ENCODE measurements at regions of chr1 and their contacts with region 1.

Region 1: DNA sequence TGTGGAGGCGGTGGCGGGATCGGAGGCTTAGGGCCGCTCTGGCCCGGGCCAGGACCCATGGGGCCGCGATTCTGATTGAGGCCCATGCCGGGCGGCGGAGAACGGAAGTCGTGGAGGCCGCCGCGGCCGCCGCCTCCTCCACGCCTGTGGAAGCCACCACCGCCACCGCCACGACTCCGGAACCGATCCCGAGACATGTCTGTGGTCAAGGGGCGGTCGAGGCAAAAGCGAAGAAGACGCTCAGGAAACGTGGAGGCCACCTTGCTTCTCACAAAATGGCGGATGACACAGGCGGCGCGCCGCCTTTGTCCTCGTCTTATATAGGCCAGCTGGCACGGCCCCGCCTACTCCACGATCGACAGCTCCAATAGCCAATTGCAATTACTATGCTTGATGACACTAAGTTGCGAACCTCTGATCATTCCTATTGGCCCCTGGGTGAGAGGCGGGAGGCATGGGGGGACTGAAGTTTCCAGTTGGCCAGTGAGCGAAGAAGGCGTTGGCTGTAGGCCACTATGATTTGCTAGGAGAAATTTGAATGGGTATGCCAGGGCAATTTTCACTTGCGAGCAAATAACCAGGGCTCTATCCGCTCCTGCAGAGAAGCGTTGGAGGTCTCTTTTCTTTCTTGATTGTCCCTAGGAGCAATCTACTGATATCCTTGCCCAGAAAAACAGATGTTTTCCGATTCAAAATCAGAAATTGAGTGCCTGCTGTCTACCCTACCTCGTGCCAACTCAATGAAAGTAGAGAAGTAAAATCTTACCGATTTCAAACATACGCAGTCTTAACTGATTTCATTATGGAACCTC is at the start of gene SFPQ:
- DNase-seq: peak; percentile 95 to 99 (median 96)

Region 2: DNA sequence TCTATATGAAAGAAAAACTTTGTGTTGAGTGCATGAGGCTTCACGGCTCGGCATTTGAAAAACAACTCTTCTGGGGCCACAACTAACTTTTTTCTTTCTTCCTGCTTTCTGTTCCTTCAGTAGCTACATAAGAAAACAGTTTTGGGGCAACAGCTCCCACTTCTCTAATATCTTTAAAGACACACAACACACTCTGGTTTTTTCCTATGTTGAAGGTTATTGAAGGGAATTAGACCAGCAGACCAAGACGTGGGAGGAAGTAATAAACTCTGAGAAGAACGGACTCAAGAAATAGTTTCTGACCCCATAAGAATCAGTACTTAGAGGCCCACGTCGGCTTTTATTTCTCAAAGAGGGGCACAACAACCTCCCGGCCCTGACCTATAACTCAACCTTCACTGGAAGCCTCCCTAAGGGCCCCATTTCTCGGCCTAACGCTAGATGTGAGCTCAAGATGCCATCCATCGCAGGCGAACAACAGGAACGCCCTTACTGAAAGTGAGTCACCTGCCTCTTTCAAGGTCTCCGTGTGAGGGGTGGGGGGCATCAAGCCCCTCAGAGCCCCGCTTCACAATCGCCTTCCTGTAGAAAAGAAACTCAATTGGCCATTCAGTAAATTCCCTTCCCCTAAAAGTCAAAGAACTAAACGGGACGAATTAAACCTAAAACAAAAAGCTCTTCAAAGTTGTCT is 162.2 kb before region 1 on chr1:
- intact Hi-C with region 1: loop called (anchors 5 kb)
- DNase-seq: peak in 2 of 10 donors; percentile 2 to 9

Region 3: DNA sequence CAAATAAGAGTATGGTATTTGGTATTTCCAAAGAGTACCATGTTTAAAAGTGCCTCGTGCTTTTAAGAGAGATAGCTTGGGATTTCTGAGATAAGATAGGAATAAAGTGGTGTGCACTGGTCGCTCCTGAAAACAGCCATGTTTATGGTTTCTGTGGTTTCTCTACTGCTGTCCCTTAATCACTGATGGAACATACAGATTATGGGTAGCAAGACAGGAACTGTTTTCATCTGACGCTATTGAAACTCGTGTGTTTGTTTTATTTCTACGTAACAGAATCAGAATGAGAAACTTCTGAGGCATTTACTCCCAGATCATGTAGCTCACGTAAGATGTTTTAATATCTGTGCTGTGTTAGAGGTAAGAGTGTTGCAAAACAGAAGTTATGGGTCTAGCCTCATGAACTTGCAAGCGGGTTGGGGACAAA is 238.1 kb after region 1 on chr1:
- intact Hi-C with region 1: no loop called
- DNase-seq: no peak

Region 4: DNA sequence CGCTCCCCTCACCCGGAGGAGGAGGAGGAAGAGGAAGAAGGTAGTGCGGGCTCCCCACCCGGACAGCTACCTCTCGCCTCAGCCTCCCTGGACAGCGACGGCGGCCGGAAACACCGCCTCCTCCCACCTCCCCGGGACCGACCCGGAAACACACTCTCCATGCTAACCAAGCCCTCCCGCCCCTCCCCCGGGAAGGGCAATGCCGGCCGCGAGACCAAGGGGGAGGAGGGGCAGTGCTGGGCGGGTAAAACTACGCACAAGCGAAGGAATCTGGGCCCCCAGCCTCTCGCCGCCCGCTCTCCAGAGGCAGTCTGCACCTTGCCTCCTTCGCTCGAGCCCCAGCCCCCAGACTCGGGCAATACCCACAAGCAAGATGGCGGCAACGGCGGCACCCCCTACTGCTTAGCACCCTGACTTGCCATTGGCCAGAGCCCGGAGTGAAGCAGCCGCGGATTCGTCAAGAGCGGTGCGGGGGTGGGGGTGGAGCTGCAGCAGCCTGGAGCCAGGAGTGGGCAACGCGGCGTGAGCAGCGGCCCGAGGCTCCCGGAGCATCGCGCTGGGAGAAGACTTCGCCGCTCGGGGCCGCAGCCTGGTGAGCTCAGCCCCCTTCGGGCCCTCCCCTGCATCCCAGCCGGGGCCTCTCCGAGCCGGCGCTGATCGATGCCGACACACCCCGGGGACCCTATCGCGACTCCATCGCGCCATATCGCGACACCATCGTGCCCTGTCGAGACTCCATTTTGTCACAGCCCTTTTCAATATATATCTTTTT is 364.4 kb after region 1 on chr1 and contains the starts of genes KIAA0319L and NCDN:
- intact Hi-C with region 1: loop called (anchors 2 kb)
- DNase-seq: peak; percentile 94 to 99 (median 96)

Region 5: GRCh38 chr1:35715568-35716002 is 522.5 kb after region 1 on chr1:
- intact Hi-C with region 1: loop called (anchors 10 kb)
- DNase-seq: peak; percentile 59 to 97 (median 82)

Measured in posterior cingulate gyrus (tissue), 11 donors.